K562 (cell line): ENCODE measurements at regions of chr4 and their contacts with region 1.

Region 1: GRCh38 chr4:177309522-177310371 is at the start of gene NEIL3:
- DNase-seq: peak; percentile 96 to 98 (median 96)
- ATAC-seq: peak; percentile 95
- H3K4me3 ChIP-seq: peak within 1 kb of the TSS; percentile 84
- H3K27ac ChIP-seq: peak within 1 kb of the TSS; percentile 80
- H3K4me1 ChIP-seq: peaks cover 5 to 8% of the 10 kb centered on the region in 2 experiments; a peak in 3 of 5 replicates
- H3K27me3 ChIP-seq: no peaks in the 10 kb centered on the region
- CTCF ChIP-seq: no peak
- EP300 ChIP-seq: peak; percentile 31; the same call in 1 of the 2 replicates
- POLR2A ChIP-seq: peak; percentile 93
- RAD21 ChIP-seq: no peak
- polyA plus RNA-seq, gene NEIL3: 2.7 to 4.8 TPM

Region 2: GRCh38 chr4:177339477-177340374 is 30.0 kb after region 1 on chr4:
- CTCF ChIA-PET with region 1: no interaction called
- POLR2A ChIA-PET with region 1: no interaction called
- in situ Hi-C with region 1: no loop called
- intact Hi-C with region 1: no loop called
- DNase-seq: peak in 3 of 4 experiments; percentile 10 to 26 (median 15)
- ATAC-seq: peak; percentile 92
- H3K4me3 ChIP-seq: no peak overlapping the region
- H3K27ac ChIP-seq: no peak overlapping the region
- H3K4me1 ChIP-seq: no peaks in the 10 kb centered on the region
- H3K27me3 ChIP-seq: no peaks in the 10 kb centered on the region
- CTCF ChIP-seq: peak; percentile 32 to 70 (median 42); a peak in 4 of 6 replicates
- EP300 ChIP-seq: no peak
- POLR2A ChIP-seq: no peak
- RAD21 ChIP-seq: peak; percentile 65 to 71

Region 3: GRCh38 chr4:177441803-177442622 is 132.3 kb after region 1 on chr4 and contains the start of gene AGA:
- CTCF ChIA-PET with region 1: no interaction called
- POLR2A ChIA-PET with region 1: interaction called, 3 read pairs
- in situ Hi-C with region 1: no loop called
- intact Hi-C with region 1: loop called (anchors 5 kb)
- DNase-seq: peak; percentile 93 to 97 (median 94)
- ATAC-seq: peak; percentile 98
- H3K4me3 ChIP-seq: peak within 1 kb of the TSS; percentile 51
- H3K27ac ChIP-seq: peak within 1 kb of the TSS; percentile 92
- H3K4me1 ChIP-seq: peaks cover 4 to 12% of the 10 kb centered on the region in 2 experiments; a peak in 4 of 5 replicates
- H3K27me3 ChIP-seq: no peaks in the 10 kb centered on the region
- CTCF ChIP-seq: 0 out of 6 replicates have a peak, but pooled peaks of 1 of the 3 experiments have one; percentile 1
- EP300 ChIP-seq: no peak; the same call in 1 of the 2 replicates
- POLR2A ChIP-seq: peak; percentile 95
- RAD21 ChIP-seq: no peak
- polyA plus RNA-seq, gene AGA: 16.6 to 18.1 TPM